IMR-90 (cell line): ENCODE measurements at regions of chr1 and their contacts with region 1.

Region 1: DNA sequence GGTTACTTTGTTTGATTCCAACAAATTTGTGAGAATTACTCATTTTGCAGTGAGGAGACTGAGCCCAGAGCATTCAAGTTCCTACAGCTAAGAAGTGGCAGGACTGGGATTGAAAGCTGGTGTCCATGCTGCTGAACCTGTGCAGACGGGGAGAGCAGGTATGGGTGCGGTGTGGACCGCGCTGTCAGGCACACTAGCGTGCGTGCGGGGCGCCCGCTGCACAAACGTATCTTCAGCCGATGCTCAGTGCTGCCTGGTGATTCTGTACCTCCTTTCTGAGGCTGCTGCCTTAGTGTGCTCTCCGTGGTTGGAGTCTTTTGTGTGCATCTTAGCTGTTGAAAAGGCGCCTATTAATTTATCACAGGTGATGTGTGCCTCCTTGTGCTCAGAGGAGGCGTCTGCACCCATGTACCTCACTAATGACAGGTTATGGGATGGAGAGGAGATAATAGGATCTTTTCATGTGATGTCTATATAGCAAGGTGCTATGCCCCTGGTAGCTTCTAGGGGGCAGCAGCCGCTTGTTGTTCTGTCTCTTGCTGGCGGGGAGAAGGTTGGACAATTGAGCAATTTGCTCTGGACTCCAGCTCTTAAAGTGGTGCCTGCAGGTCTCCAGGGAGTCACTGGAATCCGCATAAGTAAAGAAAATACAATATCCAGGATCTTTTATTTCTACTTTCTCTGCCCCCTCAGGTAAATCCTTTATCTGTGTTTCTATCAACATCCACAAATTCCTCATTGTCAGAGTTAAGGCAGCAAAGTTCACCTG is 32.5 kb downstream of the PEX14 start:
- DNase-seq: peak; percentile 83
- ATAC-seq: peak; percentile 79
- H3K4me3 ChIP-seq: no peak overlapping the region
- H3K27ac ChIP-seq: no peak overlapping the region
- H3K4me1 ChIP-seq: peaks cover 21% of the 10 kb centered on the region
- H3K27me3 ChIP-seq: no peaks in the 10 kb centered on the region
- CTCF ChIP-seq: peak; percentile 94
- POLR2A ChIP-seq: 0 out of 2 replicates have a peak, but pooled peaks have one; percentile 31
- RAD21 ChIP-seq: peak; percentile 92

Region 2: DNA sequence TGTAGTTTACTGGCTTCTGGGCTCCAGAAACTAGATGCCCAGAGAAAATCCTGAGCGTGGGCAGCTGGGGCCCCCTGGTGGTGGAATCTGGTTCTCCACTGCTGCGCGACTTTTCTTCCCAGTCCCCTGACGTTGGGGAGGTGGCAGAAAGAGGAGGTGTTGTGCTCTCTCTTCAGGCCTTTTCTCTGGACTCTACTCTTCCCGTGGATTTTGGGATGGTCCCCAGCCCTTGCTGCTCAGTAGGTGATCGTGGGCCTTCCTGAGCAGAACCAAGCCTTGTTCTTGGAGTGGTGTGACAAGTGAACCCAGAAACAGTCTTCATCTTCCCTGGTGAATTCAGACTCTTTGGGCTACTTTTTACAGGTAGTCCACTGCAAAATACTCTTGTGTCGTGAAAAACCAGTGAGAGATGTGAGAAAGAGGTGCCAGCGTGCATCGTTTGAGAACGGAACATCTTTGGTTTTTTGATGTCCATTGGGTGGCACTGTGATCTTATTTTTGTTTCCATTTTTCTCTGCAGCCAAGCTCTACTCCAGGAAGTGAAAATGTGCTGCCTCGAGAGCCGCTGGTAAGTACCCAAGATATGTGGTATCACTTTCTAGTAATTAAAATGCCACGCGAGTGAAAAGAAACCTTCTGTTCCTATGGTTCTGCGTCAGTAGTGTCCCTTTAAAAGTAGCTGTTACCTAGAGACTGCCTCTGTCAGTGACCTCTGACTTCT is 12.4 kb before region 1 on chr1:
- CTCF ChIA-PET with region 1: interaction called, 22 read pairs
- POLR2A ChIA-PET with region 1: interaction called, 3 read pairs
- dilution Hi-C with region 1: no loop called
- in situ Hi-C with region 1: no loop called
- intact Hi-C with region 1: no loop called
- DNase-seq: peak; percentile 61
- ATAC-seq: peak; percentile 95
- H3K4me3 ChIP-seq: no peak overlapping the region; the same call in 1 of the 2 replicates
- H3K27ac ChIP-seq: no peak overlapping the region
- H3K4me1 ChIP-seq: peaks cover 5% of the 10 kb centered on the region
- H3K27me3 ChIP-seq: no peaks in the 10 kb centered on the region
- CTCF ChIP-seq: peak; percentile 93
- POLR2A ChIP-seq: no peak
- RAD21 ChIP-seq: peak; percentile 84

Region 3: GRCh38 chr1:10694633-10695627 is 187.6 kb after region 1 on chr1:
- CTCF ChIA-PET with region 1: no interaction called
- POLR2A ChIA-PET with region 1: no interaction called
- dilution Hi-C with region 1: no loop called
- in situ Hi-C with region 1: no loop called
- intact Hi-C with region 1: no loop called
- DNase-seq: peak; percentile 74
- ATAC-seq: peak; percentile 94
- H3K4me3 ChIP-seq: peak overlapping the region; percentile 67
- H3K27ac ChIP-seq: no peak overlapping the region
- H3K4me1 ChIP-seq: no peaks in the 10 kb centered on the region; the same call in 1 of the 2 replicates
- H3K27me3 ChIP-seq: peaks cover 32% of the 10 kb centered on the region
- CTCF ChIP-seq: no peak
- POLR2A ChIP-seq: no peak
- RAD21 ChIP-seq: no peak

Region 4: DNA sequence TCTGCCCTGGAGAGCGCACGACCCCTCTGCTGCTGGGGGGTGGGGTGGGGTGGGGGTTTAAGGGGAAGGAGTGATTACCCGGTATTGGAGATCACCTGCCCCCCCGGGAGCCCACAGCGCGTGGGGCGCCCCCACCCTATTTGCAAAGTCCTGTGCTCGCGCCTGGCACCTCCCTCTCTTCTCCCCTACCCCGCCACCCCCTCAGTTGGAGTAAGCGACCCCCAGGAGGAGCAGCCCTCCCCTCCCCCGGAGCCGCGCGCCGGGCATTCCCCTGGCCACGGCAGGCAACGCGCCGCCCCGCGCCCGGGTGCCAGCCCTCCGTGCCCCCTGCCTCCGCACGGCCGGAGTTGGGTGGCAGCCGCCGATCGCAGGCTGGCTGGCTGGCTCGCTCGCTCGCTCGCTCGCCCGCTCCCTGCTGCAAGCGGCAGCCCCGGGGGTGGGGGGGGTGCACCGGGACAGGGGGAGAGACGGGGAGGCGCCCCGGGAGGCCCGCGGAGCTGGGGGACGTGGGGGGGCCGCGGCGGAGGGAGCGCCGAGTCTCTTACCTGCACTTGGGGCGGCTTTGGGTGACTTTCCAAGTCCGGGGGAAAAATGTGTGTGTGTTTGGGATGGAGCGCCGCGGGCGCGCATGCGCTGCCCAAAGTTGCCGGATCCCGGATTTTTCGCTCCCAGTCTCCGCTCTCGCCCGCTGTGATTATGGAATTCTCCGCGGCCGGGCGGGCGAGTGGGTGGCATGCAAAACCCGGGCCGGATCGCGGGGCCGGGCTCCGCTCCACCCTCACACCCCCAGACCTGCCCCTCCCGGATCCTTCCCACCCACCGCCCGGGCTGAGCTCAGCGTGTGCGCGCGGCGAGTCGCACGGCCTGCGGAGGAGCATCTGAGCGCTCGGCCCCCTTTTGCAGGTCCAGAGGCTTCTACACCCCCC is 289.0 kb after region 1 on chr1 and contains the start of gene CASZ1:
- CTCF ChIA-PET with region 1: no interaction called
- POLR2A ChIA-PET with region 1: no interaction called
- dilution Hi-C with region 1: no loop called
- in situ Hi-C with region 1: no loop called
- intact Hi-C with region 1: loop called (anchors 5 kb)
- DNase-seq: peak; percentile 86
- ATAC-seq: peak; percentile 94
- H3K4me3 ChIP-seq: peak within 1 kb of the TSS; percentile 34
- H3K27ac ChIP-seq: no peak within 1 kb of the TSS
- H3K4me1 ChIP-seq: peaks cover 4% of the 10 kb centered on the region; the same call in 1 of the 2 replicates
- H3K27me3 ChIP-seq: peaks cover 62% of the 10 kb centered on the region
- CTCF ChIP-seq: no peak
- POLR2A ChIP-seq: no peak
- RAD21 ChIP-seq: no peak
- total RNA-seq, gene CASZ1: under 0.01 and 0.18 TPM in 2 replicates

Region 5: GRCh38 chr1:10867138-10867721 is 359.9 kb after region 1 on chr1:
- CTCF ChIA-PET with region 1: interaction called, 9 read pairs
- POLR2A ChIA-PET with region 1: no interaction called
- dilution Hi-C with region 1: no loop called
- in situ Hi-C with region 1: loop called (anchors 5 kb)
- intact Hi-C with region 1: loop called (anchors 2 kb)
- DNase-seq: peak; percentile 18
- ATAC-seq: peak; percentile 98
- H3K4me3 ChIP-seq: peak overlapping the region; percentile 36
- H3K27ac ChIP-seq: no peak overlapping the region; the same call in 1 of the 2 replicates
- H3K4me1 ChIP-seq: peaks cover 7% of the 10 kb centered on the region
- H3K27me3 ChIP-seq: peaks cover 60% of the 10 kb centered on the region
- CTCF ChIP-seq: peak; percentile 87
- POLR2A ChIP-seq: no peak; the same call in 1 of the 2 replicates
- RAD21 ChIP-seq: peak; percentile 81

Region 6: GRCh38 chr1:10941891-10942541 is 434.7 kb after region 1 on chr1:
- CTCF ChIA-PET with region 1: no interaction called
- POLR2A ChIA-PET with region 1: no interaction called
- dilution Hi-C with region 1: no loop called
- in situ Hi-C with region 1: loop called (anchors 5 kb)
- intact Hi-C with region 1: loop called (anchors 1 kb)
- DNase-seq: no peak
- ATAC-seq: peak; percentile 80
- H3K4me3 ChIP-seq: no peak overlapping the region
- H3K27ac ChIP-seq: no peak overlapping the region
- H3K4me1 ChIP-seq: peaks cover 7% of the 10 kb centered on the region; the same call in 1 of the 2 replicates
- H3K27me3 ChIP-seq: peaks cover 41% of the 10 kb centered on the region
- CTCF ChIP-seq: peak; percentile 76
- POLR2A ChIP-seq: no peak
- RAD21 ChIP-seq: peak; percentile 73

Region 7: DNA sequence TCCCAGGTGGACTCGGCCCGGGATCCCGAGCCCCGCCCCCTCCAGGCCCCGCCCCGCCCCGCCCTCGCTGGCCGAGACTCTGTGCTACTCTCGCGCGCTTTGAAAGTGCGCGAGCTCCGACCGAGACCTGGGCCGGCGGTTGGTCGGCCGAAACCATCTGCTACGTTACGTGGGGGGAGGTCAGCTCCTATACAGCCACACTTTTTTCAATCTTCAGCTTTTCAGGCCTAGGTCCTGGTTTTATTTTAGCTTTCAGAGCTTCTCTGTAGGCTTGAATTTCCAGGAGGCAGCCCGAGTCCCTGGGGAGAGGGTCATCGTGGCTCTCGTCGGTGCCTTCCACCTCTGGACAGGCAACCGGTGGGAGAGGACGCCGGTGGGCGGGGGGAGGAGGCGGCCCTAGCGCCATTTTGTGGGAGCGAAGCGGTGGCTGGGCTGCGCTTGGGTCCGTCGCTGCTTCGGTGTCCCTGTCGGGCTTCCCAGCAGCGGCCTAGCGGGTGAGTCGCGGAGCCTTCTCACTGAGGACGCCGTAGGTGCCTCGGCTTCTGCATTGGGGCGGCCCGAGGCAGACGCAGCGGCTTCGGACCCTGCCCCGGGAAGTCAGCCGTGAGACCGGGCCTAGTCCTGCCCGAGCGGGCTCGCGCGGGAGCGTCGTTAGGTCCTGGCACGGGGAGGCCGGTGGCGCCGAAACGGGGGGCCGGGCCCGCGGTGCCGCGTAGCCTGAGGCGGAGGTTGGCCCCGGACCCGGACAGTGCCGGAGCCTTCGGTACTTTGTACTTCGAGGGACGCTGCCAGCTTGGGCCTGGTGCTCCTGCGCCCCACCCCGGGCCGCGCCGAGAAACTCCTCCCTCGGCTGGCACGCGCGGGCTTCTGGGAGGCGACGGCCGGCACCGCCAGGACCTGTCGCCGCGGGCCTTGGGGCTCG is 505.2 kb after region 1 on chr1 and contains the start of gene TARDBP:
- CTCF ChIA-PET with region 1: no interaction called
- POLR2A ChIA-PET with region 1: no interaction called
- dilution Hi-C with region 1: no loop called
- in situ Hi-C with region 1: no loop called
- intact Hi-C with region 1: loop called (anchors 2 kb)
- DNase-seq: peak; percentile 83
- ATAC-seq: peak; percentile 94
- H3K4me3 ChIP-seq: peak within 1 kb of the TSS; percentile 89
- H3K27ac ChIP-seq: peak within 1 kb of the TSS; percentile 99
- H3K4me1 ChIP-seq: peaks cover 2% of the 10 kb centered on the region; the same call in 1 of the 2 replicates
- H3K27me3 ChIP-seq: no peaks in the 10 kb centered on the region
- CTCF ChIP-seq: no peak
- POLR2A ChIP-seq: peak; percentile 96
- RAD21 ChIP-seq: no peak
- total RNA-seq, gene TARDBP: 36.7 and 98.0 TPM in 2 replicates